GM12878 (cell line): ENCODE measurements at regions of chr14 and their contacts with region 1.

Region 1: GRCh38 chr14:24160850-24161804 is at the start of gene IRF9:
- DNase-seq: peak; percentile 98
- ATAC-seq: peak; percentile 91
- H3K4me3 ChIP-seq: peak within 1 kb of the TSS; percentile 99
- H3K27ac ChIP-seq: peak within 1 kb of the TSS; percentile 96
- H3K4me1 ChIP-seq: peaks cover 38% of the 10 kb centered on the region
- H3K27me3 ChIP-seq: no peaks in the 10 kb centered on the region
- CTCF ChIP-seq: peak; percentile 92 to 99 (median 98); a peak in 5 of 6 replicates
- EP300 ChIP-seq: peak in 1 of 2 experiments; percentile 52; a peak in 1 of 4 replicates
- POLR2A ChIP-seq: peak; percentile 98
- RAD21 ChIP-seq: peak; percentile 65
- polyA plus RNA-seq, gene IRF9: 47.6 to 58.7 TPM

Region 2: DNA sequence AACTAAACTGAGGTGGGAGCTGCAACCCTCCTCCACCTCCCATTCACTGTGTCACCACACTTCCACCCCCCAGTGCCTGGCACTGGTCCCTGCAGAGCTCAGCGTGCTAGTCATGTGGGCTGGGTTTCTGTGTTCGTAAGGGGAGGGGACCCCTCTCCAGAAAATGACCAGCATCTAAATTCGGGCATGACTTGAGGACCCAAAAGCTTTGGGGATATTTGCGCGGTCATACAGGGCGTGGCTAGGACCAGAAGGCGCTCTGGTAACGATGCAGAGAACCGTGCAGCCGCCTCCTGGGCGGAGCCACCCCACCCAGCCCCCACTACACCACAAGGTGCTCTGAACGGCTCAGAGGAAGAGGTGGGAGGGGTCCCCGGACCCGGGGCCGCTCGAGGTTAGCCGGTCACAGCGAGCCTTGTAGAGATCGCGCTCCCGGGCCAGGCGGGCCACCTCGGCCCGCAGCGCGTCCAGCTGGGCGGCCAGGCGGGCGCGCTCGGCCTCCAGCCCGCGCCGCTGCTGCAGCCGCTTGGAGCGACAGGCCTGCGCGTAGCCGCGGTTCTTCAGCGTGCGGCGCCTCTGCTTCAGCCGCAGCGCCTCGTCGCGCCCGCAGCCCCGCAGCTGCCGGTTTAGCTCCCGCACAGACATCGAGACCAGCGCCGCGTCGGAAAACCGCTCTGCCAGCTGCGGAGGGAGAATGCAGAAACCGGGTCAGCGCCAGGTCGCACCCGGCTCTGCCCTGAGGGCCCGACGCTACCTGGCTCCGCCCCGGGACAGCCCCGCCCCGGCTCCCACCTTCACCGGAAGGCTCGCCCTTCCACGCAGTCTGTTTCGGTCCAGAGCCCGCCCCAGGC is 80.0 kb before region 1 on chr14:
- CTCF ChIA-PET with region 1: interaction called, 6 read pairs
- POLR2A ChIA-PET with region 1: no interaction called
- RAD21 ChIA-PET with region 1: interaction called, 11 read pairs
- SMC1A ChIA-PET with region 1: interaction called, 11 read pairs
- in situ Hi-C with region 1: no loop called
- intact Hi-C with region 1: no loop called
- DNase-seq: no peak
- ATAC-seq: peak; percentile 95
- H3K4me3 ChIP-seq: peak overlapping the region; percentile 63; the same call in 1 of the 2 replicates
- H3K27ac ChIP-seq: peak overlapping the region; percentile 67
- H3K4me1 ChIP-seq: peaks cover 14% of the 10 kb centered on the region
- H3K27me3 ChIP-seq: no peaks in the 10 kb centered on the region
- CTCF ChIP-seq: no peak
- EP300 ChIP-seq: no peak
- POLR2A ChIP-seq: peak; percentile 77
- RAD21 ChIP-seq: no peak

Region 3: DNA sequence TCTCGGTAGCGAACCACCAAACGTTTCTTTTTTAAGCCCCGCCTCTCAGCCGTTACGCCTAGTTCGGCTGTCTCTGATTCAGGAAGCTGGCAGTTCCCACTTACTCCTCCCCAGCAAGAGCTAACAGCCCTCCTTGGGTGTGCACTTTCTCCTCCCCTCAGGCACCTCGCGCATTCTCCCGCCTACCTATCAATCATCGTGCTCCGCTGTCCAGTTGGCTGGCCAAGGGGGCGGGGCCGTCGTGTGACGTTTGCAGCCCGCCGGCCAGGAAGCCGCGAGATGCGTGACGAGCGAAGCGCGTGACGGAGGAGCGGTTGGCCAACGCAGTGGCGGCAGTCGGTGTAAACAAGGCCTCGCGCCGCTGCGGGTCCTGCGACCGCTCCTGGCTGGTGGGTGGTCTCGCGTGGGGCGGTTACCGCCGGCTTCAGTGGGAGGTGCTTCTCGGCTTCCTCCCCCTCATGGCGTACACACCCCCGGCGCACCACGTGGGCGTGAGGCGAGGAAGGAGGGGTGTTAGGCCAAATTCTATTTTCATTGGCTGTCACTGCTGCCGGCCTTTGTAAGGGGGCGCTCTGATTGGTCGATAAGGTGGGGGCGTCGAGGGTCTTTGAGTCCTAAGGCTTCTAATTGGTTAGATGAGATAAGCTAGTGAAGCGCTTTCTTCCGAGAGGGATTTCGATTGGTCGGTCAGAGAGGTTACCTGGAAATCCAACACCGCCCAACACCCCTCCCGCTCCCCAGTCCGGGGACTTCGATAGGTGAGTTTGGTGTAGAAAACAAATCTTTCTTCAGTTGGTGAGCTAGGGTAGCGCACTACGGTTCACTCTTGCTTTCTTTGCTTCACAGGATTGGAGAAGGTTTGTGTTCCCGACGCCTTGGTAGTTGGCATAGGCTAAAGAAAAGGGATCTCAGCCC is 46.3 kb before region 1 on chr14 and contains the starts of genes DCAF11 and NRL:
- CTCF ChIA-PET with region 1: interaction called, 57 read pairs
- POLR2A ChIA-PET with region 1: interaction called, 76 read pairs
- RAD21 ChIA-PET with region 1: interaction called, 60 read pairs
- SMC1A ChIA-PET with region 1: interaction called, 39 read pairs
- in situ Hi-C with region 1: no loop called
- intact Hi-C with region 1: loop called (anchors 1 kb)
- DNase-seq: peak; percentile 99
- ATAC-seq: peak; percentile 92
- H3K4me3 ChIP-seq: peak within 1 kb of the TSS; percentile 96
- H3K27ac ChIP-seq: peak within 1 kb of the TSS; percentile 94
- H3K4me1 ChIP-seq: peaks cover 5% of the 10 kb centered on the region
- H3K27me3 ChIP-seq: no peaks in the 10 kb centered on the region
- CTCF ChIP-seq: no peak
- EP300 ChIP-seq: no peak
- POLR2A ChIP-seq: peak; percentile 91
- RAD21 ChIP-seq: no peak
- polyA plus RNA-seq, gene DCAF11: 13.4 to 16.4 TPM
- polyA plus RNA-seq, gene NRL: 0.11 to 0.13 TPM

Region 4: DNA sequence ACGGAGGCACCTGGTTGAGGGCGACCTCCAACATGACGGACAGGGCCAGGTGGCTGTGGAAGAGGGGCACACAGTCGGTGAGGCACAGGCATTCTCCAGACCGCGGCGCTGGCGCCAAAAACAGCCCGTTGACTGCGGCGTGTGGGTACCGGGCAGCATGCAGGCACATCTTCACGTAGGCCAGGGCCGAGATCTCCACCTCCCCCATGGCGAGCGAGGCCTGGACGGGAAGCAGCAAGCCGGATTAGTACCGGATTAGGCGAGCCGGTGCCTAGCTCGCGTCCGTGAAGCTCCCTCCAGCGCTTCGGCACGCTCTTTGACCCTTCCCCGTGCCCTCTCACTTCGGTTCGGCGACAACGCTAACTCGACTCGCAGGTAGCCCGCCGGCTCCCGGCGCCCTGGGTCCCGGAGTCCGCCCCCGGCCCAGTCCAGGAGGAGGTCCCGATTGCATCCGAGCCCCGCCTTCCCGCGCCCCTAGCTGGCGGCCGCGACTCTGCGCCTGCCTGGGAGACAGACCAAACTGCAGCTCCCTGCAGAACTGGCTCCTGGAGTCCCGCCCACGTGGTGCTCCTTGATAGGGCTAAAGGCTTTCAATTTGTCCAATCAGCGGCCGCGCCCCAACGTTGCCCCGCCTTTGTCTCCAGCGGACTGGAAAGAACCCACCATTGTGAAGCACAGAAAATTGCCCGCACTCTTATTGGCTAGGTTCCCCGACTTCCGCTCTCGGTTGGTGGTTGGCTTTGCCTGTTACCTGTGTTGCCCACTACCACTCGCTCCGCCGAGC is 19.8 kb before region 1 on chr14 and contains the start of gene EMC9:
- CTCF ChIA-PET with region 1: interaction called, 63 read pairs
- POLR2A ChIA-PET with region 1: interaction called, 99 read pairs
- RAD21 ChIA-PET with region 1: interaction called, 36 read pairs
- SMC1A ChIA-PET with region 1: interaction called, 54 read pairs
- in situ Hi-C with region 1: no loop called
- intact Hi-C with region 1: no loop called
- DNase-seq: peak; percentile 97
- ATAC-seq: peak; percentile 92
- H3K4me3 ChIP-seq: peak within 1 kb of the TSS; percentile 94
- H3K27ac ChIP-seq: peak within 1 kb of the TSS; percentile 93
- H3K4me1 ChIP-seq: peaks cover 40% of the 10 kb centered on the region
- H3K27me3 ChIP-seq: no peaks in the 10 kb centered on the region
- CTCF ChIP-seq: peak in 2 of 3 experiments; percentile 27 to 35; a peak in 4 of 6 replicates
- EP300 ChIP-seq: peak in 1 of 2 experiments; percentile 58; a peak in 2 of 4 replicates
- POLR2A ChIP-seq: peak; percentile 94
- RAD21 ChIP-seq: no peak
- polyA plus RNA-seq, gene EMC9: 15.5 to 17.8 TPM

Region 5: GRCh38 chr14:24188251-24189058 is 27.3 kb after region 1 on chr14 and contains the start of gene IPO4:
- CTCF ChIA-PET with region 1: interaction called, 8 read pairs
- POLR2A ChIA-PET with region 1: interaction called, 28 read pairs
- RAD21 ChIA-PET with region 1: interaction called, 13 read pairs
- SMC1A ChIA-PET with region 1: interaction called, 11 read pairs
- in situ Hi-C with region 1: no loop called
- intact Hi-C with region 1: no loop called
- DNase-seq: peak; percentile 88
- ATAC-seq: peak; percentile 94
- H3K4me3 ChIP-seq: peak within 1 kb of the TSS; percentile 79
- H3K27ac ChIP-seq: peak within 1 kb of the TSS; percentile 34
- H3K4me1 ChIP-seq: 0 out of 2 replicates have a peak, but pooled peaks cover 4% of the 10 kb centered on the region
- H3K27me3 ChIP-seq: no peaks in the 10 kb centered on the region
- CTCF ChIP-seq: no peak
- EP300 ChIP-seq: peak in 1 of 2 experiments; percentile 70; a peak in 2 of 4 replicates
- POLR2A ChIP-seq: peak; percentile 94
- RAD21 ChIP-seq: no peak
- polyA plus RNA-seq, gene IPO4: 7.8 to 10.3 TPM

Region 6: GRCh38 chr14:24241829-24242443 is 80.8 kb after region 1 on chr14:
- CTCF ChIA-PET with region 1: interaction called, 6 read pairs
- POLR2A ChIA-PET with region 1: interaction called, 14 read pairs
- RAD21 ChIA-PET with region 1: interaction called, 17 read pairs
- SMC1A ChIA-PET with region 1: interaction called, 5 read pairs
- in situ Hi-C with region 1: no loop called
- intact Hi-C with region 1: no loop called
- DNase-seq: no peak
- ATAC-seq: peak; percentile 90
- H3K4me3 ChIP-seq: peak overlapping the region; percentile 80
- H3K27ac ChIP-seq: peak overlapping the region; percentile 99
- H3K4me1 ChIP-seq: peaks cover 16% of the 10 kb centered on the region
- H3K27me3 ChIP-seq: no peaks in the 10 kb centered on the region
- CTCF ChIP-seq: peak; percentile 17 to 52 (median 19); a peak in 3 of 6 replicates
- EP300 ChIP-seq: no peak
- POLR2A ChIP-seq: no peak
- RAD21 ChIP-seq: no peak

Region 7: DNA sequence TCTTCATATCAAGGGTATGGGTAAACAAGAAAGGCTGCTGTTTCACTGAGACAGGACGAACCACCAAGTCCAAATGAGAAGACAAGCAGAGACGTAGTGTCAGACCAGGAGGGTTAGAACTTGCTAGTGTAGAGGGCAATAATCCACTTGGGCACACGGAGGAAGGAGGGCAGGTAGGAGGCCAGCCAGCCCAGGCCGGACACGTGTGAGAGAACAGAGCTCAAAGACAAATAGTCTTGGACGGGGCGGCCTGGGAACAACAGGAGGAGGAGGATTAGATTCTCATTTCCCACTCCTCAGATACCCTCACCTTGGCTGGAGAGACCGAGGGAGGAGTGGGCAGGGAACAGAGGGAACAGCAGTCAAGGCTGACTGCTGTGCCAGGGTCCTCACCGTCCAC is 129.6 kb after region 1 on chr14:
- CTCF ChIA-PET with region 1: no interaction called
- POLR2A ChIA-PET with region 1: no interaction called
- RAD21 ChIA-PET with region 1: no interaction called
- SMC1A ChIA-PET with region 1: no interaction called
- in situ Hi-C with region 1: no loop called
- intact Hi-C with region 1: no loop called
- DNase-seq: no peak
- ATAC-seq: no peak
- H3K4me3 ChIP-seq: no peak overlapping the region
- H3K27ac ChIP-seq: no peak overlapping the region
- H3K4me1 ChIP-seq: peaks cover 11% of the 10 kb centered on the region
- H3K27me3 ChIP-seq: no peaks in the 10 kb centered on the region
- CTCF ChIP-seq: no peak
- EP300 ChIP-seq: no peak
- POLR2A ChIP-seq: no peak
- RAD21 ChIP-seq: no peak

Region 8: DNA sequence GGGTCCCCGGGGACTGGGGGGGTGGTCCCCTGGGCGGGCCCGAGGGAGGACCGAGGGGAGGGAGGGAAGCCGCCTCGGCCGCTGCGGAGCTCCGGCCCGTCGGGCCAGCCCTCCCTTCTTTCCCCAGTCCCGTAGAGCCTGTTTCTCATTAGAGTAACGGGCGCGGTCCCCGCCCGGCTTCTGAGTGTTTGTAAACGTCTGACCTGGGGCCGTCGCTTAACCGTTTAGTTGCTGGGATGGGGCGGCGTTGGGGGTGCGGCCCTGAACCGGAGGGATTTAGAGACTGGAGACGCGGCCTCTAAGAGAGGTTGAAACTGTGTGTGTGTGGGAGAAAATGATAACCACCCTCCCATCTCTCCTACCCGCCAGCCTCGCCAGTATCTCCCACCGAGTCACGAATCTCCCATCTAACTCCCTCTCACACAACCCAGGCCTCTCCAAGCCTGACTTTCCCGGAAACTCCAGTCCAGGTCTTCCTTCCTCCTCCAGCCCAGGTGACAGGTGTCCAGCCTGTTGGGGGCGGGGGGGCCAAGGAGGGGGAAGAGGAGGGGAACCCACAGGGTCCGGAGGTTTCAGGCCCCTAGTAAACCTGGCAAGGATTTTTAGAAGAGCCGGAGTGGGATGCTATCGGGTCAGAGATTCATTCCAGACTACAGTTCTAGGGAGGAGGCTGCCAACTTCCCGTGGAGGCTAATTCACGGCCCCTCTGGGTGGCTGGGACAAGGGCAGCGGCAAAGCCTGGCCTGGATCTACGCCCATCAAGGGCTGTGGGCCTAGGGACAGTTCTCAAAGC is 205.8 kb after region 1 on chr14:
- CTCF ChIA-PET with region 1: no interaction called
- POLR2A ChIA-PET with region 1: no interaction called
- RAD21 ChIA-PET with region 1: no interaction called
- SMC1A ChIA-PET with region 1: no interaction called
- in situ Hi-C with region 1: no loop called
- intact Hi-C with region 1: no loop called
- DNase-seq: peak; percentile 34
- ATAC-seq: peak; percentile 79
- H3K4me3 ChIP-seq: peak overlapping the region; percentile 53; the same call in 1 of the 2 replicates
- H3K27ac ChIP-seq: peak overlapping the region; percentile 48
- H3K4me1 ChIP-seq: peaks cover 16% of the 10 kb centered on the region
- H3K27me3 ChIP-seq: peaks cover 1 to 6% of the 10 kb centered on the region in 2 experiments
- CTCF ChIP-seq: no peak
- EP300 ChIP-seq: peak; percentile 29 to 31; a peak in 1 of 4 replicates
- POLR2A ChIP-seq: no peak
- RAD21 ChIP-seq: no peak